Ovary (tissue), 10 donors: ENCODE measurements at regions of chr7 and their contacts with region 1.

Region 1: GRCh38 chr7:101165075-101165957 is at the start of gene VGF:
- DNase-seq: peak; percentile 78 to 93 (median 88)
- H3K4me3 ChIP-seq: no peak within 1 kb of the TSS
- H3K27ac ChIP-seq: no peak within 1 kb of the TSS
- H3K4me1 ChIP-seq: peaks cover 15% of the 10 kb centered on the region
- H3K27me3 ChIP-seq: peaks cover 2% of the 10 kb centered on the region
- CTCF ChIP-seq: no peak
- EP300 ChIP-seq: no peak
- POLR2A ChIP-seq: no peak
- total RNA-seq, gene VGF: 0.20 TPM in 1 of 7 donors, not detected in the others

Region 2: GRCh38 chr7:101201695-101202604 is 36.6 kb after region 1 on chr7:
- intact Hi-C with region 1: no loop called
- DNase-seq: no peak
- H3K4me3 ChIP-seq: no peak overlapping the region
- H3K27ac ChIP-seq: no peak overlapping the region
- H3K4me1 ChIP-seq: no peaks in the 10 kb centered on the region
- H3K27me3 ChIP-seq: peaks cover 4% of the 10 kb centered on the region
- CTCF ChIP-seq: no peak
- EP300 ChIP-seq: no peak
- POLR2A ChIP-seq: no peak

Region 3: DNA sequence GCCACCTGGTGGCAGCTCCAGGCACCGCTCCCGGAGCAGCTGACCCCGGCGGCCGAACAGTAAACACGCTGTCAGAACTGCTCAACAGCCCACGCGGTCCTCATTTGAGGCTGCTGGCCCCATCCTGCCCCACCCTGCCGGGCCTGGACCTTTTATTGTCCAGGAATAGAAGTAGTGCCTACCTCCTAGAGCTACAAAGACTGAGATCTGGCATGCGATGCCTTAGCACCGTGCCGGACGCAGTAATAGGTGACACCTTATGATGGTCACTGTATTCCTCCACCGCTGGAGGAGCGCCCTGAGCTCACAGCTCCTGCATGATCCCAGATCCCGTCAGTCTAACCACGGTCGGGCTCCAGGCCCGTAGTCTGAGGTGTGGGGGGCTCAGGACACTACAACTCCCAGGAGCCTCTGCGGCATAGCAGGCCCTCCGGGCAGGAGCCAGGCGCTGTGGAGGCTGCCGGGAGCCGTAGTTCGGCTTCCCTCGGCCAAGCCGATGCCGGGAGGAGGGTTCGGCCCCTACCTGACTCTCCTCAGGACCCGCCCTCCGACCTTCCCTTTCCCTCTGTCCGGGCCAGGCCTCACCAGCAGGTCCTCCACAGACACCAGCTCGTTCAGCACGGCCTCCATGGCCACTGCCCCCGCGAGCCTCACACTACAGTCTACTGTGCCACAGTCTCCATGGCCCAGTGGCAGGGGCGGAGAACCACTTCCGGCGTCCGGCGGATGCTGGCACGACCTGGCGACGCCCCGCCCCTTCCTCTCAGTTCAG is 79.2 kb after region 1 on chr7 and contains the start of gene FIS1:
- intact Hi-C with region 1: loop called in 1 of 4 experiments (anchors 5 kb)
- DNase-seq: peak; percentile 92 to 96 (median 92)
- H3K4me3 ChIP-seq: peak within 1 kb of the TSS; percentile 82
- H3K27ac ChIP-seq: peak within 1 kb of the TSS; percentile 81 to 88
- H3K4me1 ChIP-seq: peaks cover 5% of the 10 kb centered on the region
- H3K27me3 ChIP-seq: no peaks in the 10 kb centered on the region
- CTCF ChIP-seq: peak in 2 of 3 donors; percentile 77 to 90
- EP300 ChIP-seq: no peak
- POLR2A ChIP-seq: peak; percentile 89
- total RNA-seq, gene FIS1: 146 to 262 (median 178) TPM

Region 4: DNA sequence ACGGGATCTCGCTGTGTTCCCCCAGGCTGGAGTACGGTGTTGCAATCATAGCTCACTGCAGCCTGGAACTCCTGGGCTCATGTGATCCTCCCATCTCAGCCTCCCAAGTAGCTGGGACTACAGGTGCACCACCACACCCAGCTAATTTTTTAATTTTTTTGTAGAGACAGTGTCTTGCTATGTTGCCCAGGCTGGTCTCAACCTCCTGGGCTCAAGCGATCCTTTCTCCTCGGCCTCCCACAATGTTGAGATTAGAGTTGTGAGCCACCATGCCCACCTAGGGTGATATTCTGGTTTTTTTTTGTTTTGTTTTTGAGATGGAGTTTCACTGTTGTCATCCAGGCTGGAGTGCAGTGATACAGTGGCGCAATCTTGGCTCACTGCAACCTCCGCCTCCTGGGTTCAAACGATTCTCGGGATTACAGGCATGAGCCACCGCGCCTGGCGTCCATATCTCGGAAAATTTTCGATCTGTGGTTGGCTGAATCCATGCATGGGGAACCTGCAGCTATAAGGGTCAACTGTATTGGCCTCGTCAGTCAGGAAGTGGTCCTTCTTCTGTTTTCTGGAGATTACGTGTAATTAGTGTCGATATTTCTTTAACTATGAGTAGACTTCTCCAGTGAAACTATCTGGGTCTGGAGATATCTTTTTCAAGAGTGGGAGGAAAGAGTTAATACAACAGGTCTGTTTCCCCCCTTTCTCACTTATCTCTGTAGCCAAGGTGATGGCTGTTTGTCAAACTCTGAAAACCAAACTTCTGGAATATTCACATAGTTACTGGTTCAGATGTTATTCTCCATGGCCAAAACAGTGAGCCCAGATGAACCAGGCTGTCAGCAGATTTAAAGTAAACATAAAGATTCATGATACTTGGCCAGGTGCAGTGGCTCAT is 100.6 kb after region 1 on chr7:
- intact Hi-C with region 1: loop called in 1 of 4 experiments (anchors 10 kb)
- DNase-seq: no peak
- H3K4me3 ChIP-seq: no peak overlapping the region
- H3K27ac ChIP-seq: no peak overlapping the region
- H3K4me1 ChIP-seq: no peaks in the 10 kb centered on the region
- H3K27me3 ChIP-seq: no peaks in the 10 kb centered on the region
- CTCF ChIP-seq: no peak
- EP300 ChIP-seq: no peak
- POLR2A ChIP-seq: no peak

Region 5: DNA sequence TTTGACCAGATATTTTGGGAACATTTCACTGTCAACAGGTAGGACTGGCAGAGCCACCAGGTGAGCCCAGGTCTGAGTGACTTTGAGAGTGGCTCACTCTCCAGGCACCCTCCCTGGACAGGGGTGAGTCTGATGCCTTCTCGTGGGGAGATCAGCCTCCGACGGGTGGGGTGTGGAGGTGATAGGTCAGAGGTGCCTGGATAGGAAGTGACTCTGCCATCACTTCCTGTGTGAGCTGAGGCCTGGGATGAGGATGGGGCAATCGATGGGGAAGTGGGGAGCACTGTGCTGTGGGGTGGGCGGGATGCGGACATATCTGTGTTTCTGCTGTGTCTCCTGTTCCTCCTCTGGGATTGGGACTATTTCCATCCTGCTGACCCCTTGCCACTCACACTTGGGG is 121.7 kb after region 1 on chr7:
- intact Hi-C with region 1: loop called in 1 of 4 experiments (anchors 10 kb)
- DNase-seq: no peak
- H3K4me3 ChIP-seq: no peak overlapping the region
- H3K27ac ChIP-seq: no peak overlapping the region
- H3K4me1 ChIP-seq: peaks cover 2% of the 10 kb centered on the region
- H3K27me3 ChIP-seq: no peaks in the 10 kb centered on the region
- CTCF ChIP-seq: no peak
- EP300 ChIP-seq: no peak
- POLR2A ChIP-seq: no peak